CD14-positive monocyte (primary cell): ENCODE measurements at regions of chr4 and their contacts with region 1.

Region 1: GRCh38 chr4:70704331-70705145 is 16.2 kb downstream of the UTP3 start:
- DNase-seq: peak; percentile 53 to 79 (median 70)
- H3K4me3 ChIP-seq: peak overlapping the region; percentile 62 to 81 (median 66)
- H3K4me3 Mint-ChIP-seq: peak overlapping the region; percentile 89 to 92
- H3K27ac ChIP-seq: peak overlapping the region; percentile 12 to 80
- H3K27ac Mint-ChIP-seq: peak overlapping the region; percentile 74 to 91 (median 83)
- H3K4me1 ChIP-seq: peaks cover 17 to 30% of the 10 kb centered on the region in 2 donors
- H3K4me1 Mint-ChIP-seq: peaks cover 29% of the 10 kb centered on the region
- H3K27me3 ChIP-seq: no peaks in the 10 kb centered on the region
- H3K27me3 Mint-ChIP-seq: no peaks in the 10 kb centered on the region
- CTCF ChIP-seq: peak; percentile 42

Region 2: DNA sequence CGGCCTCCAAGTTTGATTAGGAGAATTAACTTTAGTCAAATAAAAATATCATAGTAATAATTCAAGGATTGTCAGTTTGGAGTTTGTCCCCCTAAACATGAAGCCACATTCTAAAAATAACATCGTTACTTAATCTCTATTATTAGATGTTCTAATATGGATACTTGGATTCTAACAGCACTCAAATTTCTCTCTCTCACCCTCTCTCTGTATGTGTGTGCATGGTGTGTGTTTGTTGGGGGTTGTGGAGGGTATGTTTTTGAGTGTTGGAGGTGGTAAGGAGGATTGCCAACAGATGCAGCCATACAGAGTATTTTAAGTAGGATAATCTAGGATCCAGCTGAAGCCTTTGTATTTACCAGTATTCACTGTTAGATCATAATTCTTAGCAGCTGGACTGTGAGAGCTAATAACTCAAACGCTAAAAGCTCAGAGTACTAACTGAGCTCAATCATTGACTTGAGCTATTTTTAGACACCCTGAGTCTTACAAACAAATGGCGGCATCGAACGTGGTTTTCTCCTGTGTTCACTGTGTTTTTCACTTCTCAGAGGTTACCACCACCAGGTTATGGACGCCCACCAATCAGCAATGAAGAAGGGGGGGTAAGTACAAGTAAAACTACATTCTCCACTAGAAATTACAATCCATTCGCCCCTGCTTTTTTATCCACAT is 67.2 kb before region 1 on chr4:
- intact Hi-C with region 1: no loop called
- DNase-seq: no peak
- H3K4me3 ChIP-seq: no peak overlapping the region
- H3K4me3 Mint-ChIP-seq: no peak overlapping the region
- H3K27ac ChIP-seq: no peak overlapping the region
- H3K27ac Mint-ChIP-seq: no peak overlapping the region
- H3K4me1 ChIP-seq: no peaks in the 10 kb centered on the region
- H3K4me1 Mint-ChIP-seq: no peaks in the 10 kb centered on the region
- H3K27me3 ChIP-seq: no peaks in the 10 kb centered on the region
- H3K27me3 Mint-ChIP-seq: no peaks in the 10 kb centered on the region
- CTCF ChIP-seq: no peak

Region 3: GRCh38 chr4:70687821-70688794 is 16.4 kb before region 1 on chr4 and contains the start of gene UTP3:
- intact Hi-C with region 1: loop called in 1 of 2 experiments (anchors 2 kb)
- DNase-seq: peak; percentile 96 to 98 (median 98)
- H3K4me3 ChIP-seq: peak within 1 kb of the TSS; percentile 68 to 95 (median 93)
- H3K4me3 Mint-ChIP-seq: peak within 1 kb of the TSS; percentile 95 to 98
- H3K27ac ChIP-seq: peak within 1 kb of the TSS; percentile 93 to 95
- H3K27ac Mint-ChIP-seq: peak within 1 kb of the TSS; percentile 89 to 99 (median 98)
- H3K4me1 ChIP-seq: peaks cover 42 to 54% of the 10 kb centered on the region in 2 donors
- H3K4me1 Mint-ChIP-seq: peaks cover 38% of the 10 kb centered on the region
- H3K27me3 ChIP-seq: no peaks in the 10 kb centered on the region
- H3K27me3 Mint-ChIP-seq: peaks cover 0 to 3% (median 2%) of the 10 kb centered on the region in 3 donors
- CTCF ChIP-seq: peak; percentile 96
- polyA plus RNA-seq, gene UTP3: 3.0 to 10.8 (median 5.0) TPM

Region 4: DNA sequence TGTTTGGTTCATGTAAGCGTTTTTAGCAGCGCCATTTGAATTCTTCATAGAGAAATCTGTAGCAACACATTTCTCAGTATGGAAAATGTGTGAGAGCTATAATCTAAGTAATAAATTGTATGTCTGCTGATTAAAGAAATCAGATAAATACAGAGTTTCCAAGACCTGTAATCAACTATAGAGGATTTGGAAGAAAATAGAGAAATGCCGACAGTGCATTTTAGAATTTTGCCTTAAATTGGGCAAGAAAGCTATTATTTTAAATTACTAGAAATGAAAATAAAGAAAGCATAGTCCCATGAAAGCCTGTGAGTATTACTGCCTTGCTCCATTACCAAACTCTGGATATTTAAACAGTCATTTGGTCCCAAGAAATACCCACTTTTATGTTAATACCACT is 19.9 kb after region 1 on chr4:
- intact Hi-C with region 1: no loop called
- DNase-seq: no peak
- H3K4me3 ChIP-seq: no peak overlapping the region
- H3K4me3 Mint-ChIP-seq: no peak overlapping the region
- H3K27ac ChIP-seq: no peak overlapping the region
- H3K27ac Mint-ChIP-seq: no peak overlapping the region
- H3K4me1 ChIP-seq: peaks cover 7 to 10% of the 10 kb centered on the region in 2 donors
- H3K4me1 Mint-ChIP-seq: peaks cover 22% of the 10 kb centered on the region
- H3K27me3 ChIP-seq: no peaks in the 10 kb centered on the region
- H3K27me3 Mint-ChIP-seq: peaks cover 0 to 2% (median 0%) of the 10 kb centered on the region in 3 donors
- CTCF ChIP-seq: no peak

Region 5: GRCh38 chr4:70734971-70735370 is 30.4 kb after region 1 on chr4:
- intact Hi-C with region 1: loop called in 1 of 2 experiments (anchors 5 kb)
- DNase-seq: no peak
- H3K4me3 ChIP-seq: peak overlapping the region; percentile 36 to 92 (median 76)
- H3K4me3 Mint-ChIP-seq: peak overlapping the region; percentile 67 to 87
- H3K27ac ChIP-seq: peak overlapping the region; percentile 30 to 90
- H3K27ac Mint-ChIP-seq: peak overlapping the region; percentile 91 to 97 (median 95)
- H3K4me1 ChIP-seq: peaks cover 47 to 53% of the 10 kb centered on the region in 2 donors
- H3K4me1 Mint-ChIP-seq: peaks cover 43% of the 10 kb centered on the region
- H3K27me3 ChIP-seq: no peaks in the 10 kb centered on the region
- H3K27me3 Mint-ChIP-seq: peaks cover 0 to 2% (median 0%) of the 10 kb centered on the region in 3 donors
- CTCF ChIP-seq: no peak

Region 6: GRCh38 chr4:70754470-70754869 is 49.9 kb after region 1 on chr4:
- intact Hi-C with region 1: loop called in 1 of 2 experiments (anchors 10 kb)
- DNase-seq: peak; percentile 42 to 70 (median 66)
- H3K4me3 ChIP-seq: peak overlapping the region in 2 of 3 experiments; percentile 31 to 48
- H3K4me3 Mint-ChIP-seq: peak overlapping the region; percentile 34 to 72
- H3K27ac ChIP-seq: peak overlapping the region; percentile 76 to 78
- H3K27ac Mint-ChIP-seq: peak overlapping the region; percentile 78 to 95 (median 94)
- H3K4me1 ChIP-seq: peaks cover 20 to 27% of the 10 kb centered on the region in 2 donors
- H3K4me1 Mint-ChIP-seq: peaks cover 39% of the 10 kb centered on the region
- H3K27me3 ChIP-seq: no peaks in the 10 kb centered on the region
- H3K27me3 Mint-ChIP-seq: no peaks in the 10 kb centered on the region
- CTCF ChIP-seq: no peak

Region 7: DNA sequence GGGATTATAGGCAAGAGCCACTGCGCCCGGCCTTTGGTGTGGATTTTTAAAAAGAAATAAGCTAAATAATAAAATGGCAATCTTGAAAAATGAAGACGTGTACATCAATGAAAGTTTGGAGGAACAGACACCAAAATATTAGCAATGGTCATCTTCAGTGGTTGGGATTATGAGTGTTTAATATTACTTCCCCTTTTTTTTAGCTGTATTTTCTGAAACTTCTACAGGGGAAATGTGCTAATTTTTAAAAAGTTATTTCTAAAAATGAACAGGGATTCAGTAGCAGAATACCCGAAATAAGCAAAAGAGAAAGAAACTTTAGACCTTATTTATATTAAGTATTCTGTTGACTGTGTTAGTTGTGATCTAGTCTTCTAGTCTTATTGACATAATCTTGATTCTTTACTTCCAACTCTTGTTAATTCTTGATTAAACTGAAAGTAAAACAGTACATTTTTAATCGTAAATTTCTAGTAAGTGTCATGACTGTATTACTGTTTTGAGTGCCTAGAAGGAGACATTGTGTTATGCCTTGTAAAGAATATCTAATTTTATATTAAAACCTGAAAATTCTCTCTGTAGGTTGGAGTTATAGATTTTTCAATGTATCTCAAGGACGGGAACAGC is 68.5 kb after region 1 on chr4:
- intact Hi-C with region 1: loop called in 1 of 2 experiments (anchors 5 kb)
- DNase-seq: peak; percentile 27 to 45 (median 28)
- H3K4me3 ChIP-seq: peak overlapping the region; percentile 24 to 65 (median 65)
- H3K4me3 Mint-ChIP-seq: peak overlapping the region; percentile 37 to 67
- H3K27ac ChIP-seq: peak overlapping the region; percentile 38 to 81
- H3K27ac Mint-ChIP-seq: peak overlapping the region; percentile 73 to 95 (median 86)
- H3K4me1 ChIP-seq: peaks cover 4% of the 10 kb centered on the region in 2 donors
- H3K4me1 Mint-ChIP-seq: peaks cover 6% of the 10 kb centered on the region
- H3K27me3 ChIP-seq: no peaks in the 10 kb centered on the region
- H3K27me3 Mint-ChIP-seq: no peaks in the 10 kb centered on the region
- CTCF ChIP-seq: no peak

Region 8: DNA sequence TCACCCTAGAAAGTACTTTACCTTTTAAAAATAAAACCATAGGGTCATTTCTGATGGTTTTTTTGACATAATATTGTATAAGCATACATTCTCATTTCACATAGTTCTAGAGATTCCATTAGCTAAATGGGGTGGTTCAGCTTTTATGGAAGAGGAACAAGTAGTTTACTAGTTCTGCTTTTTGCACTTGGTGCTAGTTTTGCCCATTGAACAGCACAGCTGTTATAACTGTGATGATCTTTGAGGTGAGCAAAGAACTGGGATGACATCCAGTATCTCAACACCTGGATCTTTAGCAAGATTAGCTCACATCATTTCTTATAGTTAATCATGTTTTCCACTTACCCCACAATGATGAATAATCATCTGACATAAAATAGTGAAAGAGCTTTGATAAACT is 238.6 kb after region 1 on chr4:
- intact Hi-C with region 1: no loop called
- DNase-seq: peak; percentile 33 to 69 (median 41)
- H3K4me3 ChIP-seq: peak overlapping the region in 2 of 3 experiments; percentile 10 to 12
- H3K4me3 Mint-ChIP-seq: no peak overlapping the region
- H3K27ac ChIP-seq: peak overlapping the region in 1 of 2 donors; percentile 65
- H3K27ac Mint-ChIP-seq: peak overlapping the region in 6 of 7 donors; percentile 31 to 71 (median 62)
- H3K4me1 ChIP-seq: peaks cover 55 to 63% of the 10 kb centered on the region in 2 donors
- H3K4me1 Mint-ChIP-seq: peaks cover 52% of the 10 kb centered on the region
- H3K27me3 ChIP-seq: no peaks in the 10 kb centered on the region
- H3K27me3 Mint-ChIP-seq: no peaks in the 10 kb centered on the region
- CTCF ChIP-seq: no peak